Caco-2 (cell line): ENCODE measurements at regions of chr10 and their contacts with region 1.

Region 1: DNA sequence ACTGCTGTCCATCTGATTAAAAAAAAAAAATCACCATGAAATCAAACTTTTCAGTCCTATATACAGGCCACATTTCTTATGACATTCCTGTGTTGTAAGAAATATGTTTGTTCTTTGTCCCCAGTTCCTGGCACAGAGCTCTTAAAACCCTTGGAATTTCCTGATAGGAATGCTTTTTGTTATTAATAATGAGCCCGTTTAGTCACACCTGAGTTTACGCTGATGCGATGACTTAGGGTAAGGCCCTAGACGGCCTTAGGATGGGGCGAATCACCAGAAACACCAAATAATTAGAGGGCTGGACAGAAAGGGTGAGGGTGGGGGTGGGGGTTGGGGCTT is 17.5 kb downstream of the TSPAN15 start:
- DNase-seq: peak in 1 of 2 experiments; percentile 35
- H3K4me3 ChIP-seq: no peak overlapping the region
- H3K4me3 Mint-ChIP-seq: no peak overlapping the region
- H3K27ac Mint-ChIP-seq: peak overlapping the region; percentile 49
- H3K4me1 ChIP-seq: peaks cover 28% of the 10 kb centered on the region
- H3K4me1 Mint-ChIP-seq: peaks cover 9% of the 10 kb centered on the region
- H3K27me3 ChIP-seq: no peaks in the 10 kb centered on the region
- H3K27me3 Mint-ChIP-seq: no peaks in the 10 kb centered on the region
- CTCF ChIP-seq: no peak

Region 2: DNA sequence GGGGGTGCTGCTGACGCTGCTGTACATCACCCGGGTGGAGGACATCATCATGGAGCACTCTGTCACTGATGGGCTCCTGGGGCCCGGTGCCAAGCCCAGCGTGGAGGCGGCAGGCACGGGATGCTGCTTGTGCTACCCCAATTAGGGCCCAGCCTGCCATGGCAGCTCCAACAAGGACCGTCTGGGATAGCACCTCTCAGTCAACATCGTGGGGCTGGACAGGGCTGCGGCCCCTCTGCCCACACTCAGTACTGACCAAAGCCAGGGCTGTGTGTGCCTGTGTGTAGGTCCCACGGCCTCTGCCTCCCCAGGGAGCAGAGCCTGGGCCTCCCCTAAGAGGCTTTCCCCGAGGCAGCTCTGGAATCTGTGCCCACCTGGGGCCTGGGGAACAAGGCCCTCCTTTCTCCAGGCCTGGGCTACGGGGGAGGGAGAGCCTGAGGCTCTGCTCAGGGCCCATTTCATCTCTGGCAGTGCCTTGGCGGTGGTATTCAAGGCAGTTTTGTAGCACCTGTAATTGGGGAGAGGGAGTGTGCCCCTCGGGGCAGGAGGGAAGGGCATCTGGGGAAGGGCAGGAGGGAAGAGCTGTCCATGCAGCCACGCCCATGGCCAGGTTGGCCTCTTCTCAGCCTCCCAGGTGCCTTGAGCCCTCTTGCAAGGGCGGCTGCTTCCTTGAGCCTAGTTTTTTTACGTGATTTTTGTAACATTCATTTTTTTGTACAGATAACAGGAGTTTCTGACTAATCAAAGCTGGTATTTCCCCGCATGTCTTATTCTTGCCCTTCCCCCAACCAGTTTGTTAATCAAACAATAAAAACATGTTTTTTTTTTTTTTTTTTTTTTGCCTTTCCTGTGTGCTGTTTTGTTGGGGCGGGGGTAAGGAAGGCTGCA is 38.4 kb after region 1 on chr10:
- CTCF ChIA-PET with region 1: interaction called, 10 read pairs
- POLR2A ChIA-PET with region 1: no interaction called
- intact Hi-C with region 1: no loop called
- DNase-seq: peak in 1 of 2 experiments; percentile 44
- H3K4me3 ChIP-seq: no peak overlapping the region
- H3K4me3 Mint-ChIP-seq: no peak overlapping the region
- H3K27ac Mint-ChIP-seq: no peak overlapping the region
- H3K4me1 ChIP-seq: peaks cover 5% of the 10 kb centered on the region
- H3K4me1 Mint-ChIP-seq: no peaks in the 10 kb centered on the region
- H3K27me3 ChIP-seq: no peaks in the 10 kb centered on the region
- H3K27me3 Mint-ChIP-seq: no peaks in the 10 kb centered on the region
- CTCF ChIP-seq: no peak